ENCODE measurements at regions of chr15 and their contacts with region 1.

Region 1: GRCh38 chr15:98873441-98874201 is 134.0 kb downstream of the PGPEP1L start:
- DNase-seq: peak; percentile 97
- ATAC-seq: peak; percentile 86 to 89
- H3K4me3 ChIP-seq: peak overlapping the region; percentile 26
- H3K27ac ChIP-seq: peak overlapping the region; percentile 95 to 97
- H3K4me1 ChIP-seq: peaks cover 96% of the 10 kb centered on the region
- CTCF ChIP-seq: peak; percentile 43
- EP300 ChIP-seq: peak; percentile 96 to 99
- POLR2A ChIP-seq: no peak; the same call in 1 of the 2 replicates
- RAD21 ChIP-seq: peak; percentile 30 to 36

Region 2: GRCh38 chr15:98805434-98806274 is 68.0 kb before region 1 on chr15:
- CTCF ChIA-PET with region 1: no interaction called
- POLR2A ChIA-PET with region 1: no interaction called
- DNase-seq: peak in 1 of 2 experiments; percentile 61
- ATAC-seq: peak; percentile 58 to 77; a peak in 5 of 6 replicates
- H3K4me3 ChIP-seq: no peak overlapping the region
- H3K27ac ChIP-seq: peak overlapping the region; percentile 29 to 66; a peak in 5 of 6 replicates
- H3K4me1 ChIP-seq: peaks cover 66% of the 10 kb centered on the region
- CTCF ChIP-seq: no peak
- EP300 ChIP-seq: no peak
- POLR2A ChIP-seq: no peak
- RAD21 ChIP-seq: no peak

Region 3: GRCh38 chr15:98856218-98856907 is 17.3 kb before region 1 on chr15:
- CTCF ChIA-PET with region 1: interaction called, 97 read pairs
- POLR2A ChIA-PET with region 1: interaction called, 61 read pairs
- DNase-seq: peak in 1 of 2 experiments; percentile 77
- ATAC-seq: peak in 1 of 2 experiments; percentile 1; a peak in 3 of 6 replicates
- H3K4me3 ChIP-seq: no peak overlapping the region
- H3K27ac ChIP-seq: peak overlapping the region; percentile 95 to 97
- H3K4me1 ChIP-seq: peaks cover 88% of the 10 kb centered on the region
- CTCF ChIP-seq: no peak
- EP300 ChIP-seq: peak; percentile 77 to 92; a peak in 3 of 5 replicates
- POLR2A ChIP-seq: no peak
- RAD21 ChIP-seq: peak; percentile 2 to 30; a peak in 3 of 5 replicates

Region 4: DNA sequence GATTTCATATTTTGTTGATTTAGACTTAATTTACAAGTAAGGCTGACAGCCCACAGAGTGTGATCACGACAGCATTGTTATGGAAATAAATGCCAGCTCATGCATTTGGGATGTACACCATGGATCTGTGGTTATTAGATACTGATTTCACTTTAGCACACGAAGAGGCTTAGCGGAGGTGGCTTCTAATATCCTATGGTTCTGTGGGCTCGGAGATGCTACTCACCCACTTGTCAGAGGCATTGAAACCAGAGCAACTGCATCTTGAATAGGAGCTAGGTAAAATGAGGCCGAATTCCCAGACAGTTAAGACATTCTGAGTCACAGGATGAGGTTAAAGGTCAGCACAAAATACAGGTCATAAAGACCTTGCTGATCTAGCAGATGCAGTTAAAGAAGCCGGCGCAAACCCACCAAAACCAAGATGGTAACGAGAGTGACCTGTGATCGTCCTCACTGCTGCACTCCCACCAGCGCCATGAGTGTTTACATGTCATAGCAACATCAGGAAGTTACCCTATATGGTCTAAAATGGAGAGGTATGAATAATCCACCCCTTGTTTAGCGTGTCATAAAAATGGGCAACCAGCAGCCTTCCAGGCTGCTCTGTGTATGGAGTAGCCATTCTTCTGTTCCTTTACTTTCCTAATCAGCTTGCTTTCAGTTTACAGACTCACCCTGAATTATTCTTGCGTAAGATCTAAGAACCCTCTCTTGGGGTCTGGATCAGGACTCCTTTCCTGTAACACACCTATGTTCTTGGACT is 16.5 kb after region 1 on chr15:
- CTCF ChIA-PET with region 1: interaction called, 42 read pairs
- POLR2A ChIA-PET with region 1: interaction called, 40 read pairs
- DNase-seq: peak in 1 of 2 experiments; percentile 88
- ATAC-seq: peak; percentile 67 to 75
- H3K4me3 ChIP-seq: no peak overlapping the region
- H3K27ac ChIP-seq: peak overlapping the region; percentile 95 to 97
- H3K4me1 ChIP-seq: peaks cover 97% of the 10 kb centered on the region
- CTCF ChIP-seq: no peak
- EP300 ChIP-seq: peak; percentile 43 to 64; a peak in 2 of 5 replicates
- POLR2A ChIP-seq: no peak
- RAD21 ChIP-seq: 0 out of 5 replicates have a peak, but pooled peaks of 1 of the 2 experiments have one; percentile 13

Region 5: DNA sequence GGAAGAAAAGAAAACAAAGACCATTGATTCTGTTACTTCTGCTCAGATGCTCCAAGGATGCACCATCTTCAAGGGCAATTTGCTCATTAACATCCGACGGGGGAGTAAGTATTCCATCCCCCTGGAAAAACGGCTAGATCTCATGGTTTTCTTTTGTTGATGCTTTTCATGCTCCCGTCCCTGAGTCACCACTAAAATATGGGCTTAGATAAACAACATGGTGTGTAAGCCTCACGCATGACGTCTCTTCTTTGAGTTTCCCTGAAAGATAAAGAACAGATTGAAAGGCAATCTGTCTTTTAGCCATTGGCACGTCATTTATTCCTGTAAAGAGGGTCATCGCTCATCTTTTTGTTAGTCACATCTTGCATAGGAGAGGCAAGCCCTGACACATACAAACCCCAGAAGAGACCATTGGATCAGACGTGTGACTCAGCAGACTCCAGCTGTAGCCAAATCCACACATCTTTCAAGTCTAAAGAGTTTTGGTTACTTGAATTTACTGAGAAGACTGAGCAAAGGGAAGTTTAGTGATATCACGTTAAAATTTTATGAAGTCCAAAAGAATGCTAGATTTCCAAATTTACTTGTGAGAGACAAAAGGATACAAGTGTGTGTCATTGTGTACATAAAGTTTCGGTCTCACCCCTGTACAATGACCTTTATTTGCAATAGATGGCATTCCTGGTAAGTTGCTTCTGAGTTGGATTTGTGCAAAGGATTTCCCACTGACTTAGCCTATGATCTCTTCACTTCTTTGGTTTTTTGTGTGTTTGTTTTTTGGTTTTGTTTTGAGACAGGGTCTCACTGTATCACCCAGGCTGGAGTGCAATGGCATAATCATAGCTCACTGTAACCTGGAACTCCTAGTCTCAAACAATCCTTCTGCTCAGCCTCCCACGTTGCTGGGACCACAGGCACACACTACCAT is 23.4 kb after region 1 on chr15:
- CTCF ChIA-PET with region 1: interaction called, 42 read pairs
- POLR2A ChIA-PET with region 1: interaction called, 40 read pairs
- DNase-seq: peak; percentile 99 to 100
- ATAC-seq: peak; percentile 90 to 91
- H3K4me3 ChIP-seq: peak overlapping the region; percentile 14; the same call in 2 of the 3 replicates
- H3K27ac ChIP-seq: peak overlapping the region; percentile 95 to 97
- H3K4me1 ChIP-seq: peaks cover 94% of the 10 kb centered on the region
- CTCF ChIP-seq: no peak
- EP300 ChIP-seq: peak; percentile 100
- POLR2A ChIP-seq: no peak
- RAD21 ChIP-seq: peak; percentile 46 to 58; a peak in 4 of 5 replicates

Region 6: GRCh38 chr15:99059010-99059981 is 185.7 kb after region 1 on chr15:
- CTCF ChIA-PET with region 1: interaction called, 15 read pairs
- POLR2A ChIA-PET with region 1: interaction called, 7 read pairs
- DNase-seq: peak; percentile 78 to 84
- ATAC-seq: peak; percentile 80 to 86
- H3K4me3 ChIP-seq: peak overlapping the region; percentile 51
- H3K27ac ChIP-seq: peak overlapping the region; percentile 87 to 95
- H3K4me1 ChIP-seq: peaks cover 14% of the 10 kb centered on the region; the same call in 2 of the 3 replicates
- CTCF ChIP-seq: peak; percentile 85
- EP300 ChIP-seq: peak in 1 of 2 experiments; percentile 47; a peak in 1 of 5 replicates
- POLR2A ChIP-seq: peak; percentile 30
- RAD21 ChIP-seq: peak; percentile 72 to 95

Measured in A549 (cell line).